ENCODE measurements at regions of chr3 and their contacts with region 1.

Region 1: DNA sequence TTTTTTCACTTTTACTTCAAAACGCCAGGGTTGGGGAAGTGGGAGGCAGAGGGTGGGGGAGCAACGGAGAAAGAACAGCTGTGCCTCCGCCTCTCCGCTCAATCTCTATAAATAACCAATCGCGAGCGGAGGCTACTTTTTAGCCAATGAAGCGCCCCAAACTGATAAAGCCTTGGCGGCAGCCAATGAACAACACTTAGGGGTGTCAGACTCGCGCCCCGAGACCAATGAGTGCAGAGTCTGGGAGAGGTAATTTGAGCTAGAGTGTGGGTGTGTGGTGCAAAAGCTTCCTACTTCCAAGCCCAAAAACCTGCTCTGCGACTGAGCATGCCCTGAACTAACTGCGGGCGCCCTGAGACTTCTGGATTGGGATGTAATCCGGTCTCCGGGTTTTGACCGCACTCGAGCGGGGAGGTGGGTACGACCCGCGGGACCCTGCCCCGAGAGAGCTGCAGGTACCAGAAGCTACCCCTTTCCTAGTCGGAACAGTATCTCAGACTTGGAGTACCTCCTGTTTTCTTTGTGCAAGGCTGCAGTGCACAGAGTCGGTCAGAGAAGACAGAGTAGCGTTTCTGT is 800 bp upstream of the RAP2B start:
- DNase-seq: peak; percentile 99
- H3K4me3 ChIP-seq: peak overlapping the region; percentile 66
- H3K27me3 ChIP-seq: no peaks in the 10 kb centered on the region
- CTCF ChIP-seq: no peak

Region 2: GRCh38 chr3:153043729-153044328 is 117.4 kb before region 1 on chr3:
- CTCF ChIA-PET with region 1: interaction called, 12 read pairs
- POLR2A ChIA-PET with region 1: interaction called, 5 read pairs
- DNase-seq: no peak
- H3K4me3 ChIP-seq: no peak overlapping the region
- H3K27me3 ChIP-seq: no peaks in the 10 kb centered on the region
- CTCF ChIP-seq: no peak

Region 3: DNA sequence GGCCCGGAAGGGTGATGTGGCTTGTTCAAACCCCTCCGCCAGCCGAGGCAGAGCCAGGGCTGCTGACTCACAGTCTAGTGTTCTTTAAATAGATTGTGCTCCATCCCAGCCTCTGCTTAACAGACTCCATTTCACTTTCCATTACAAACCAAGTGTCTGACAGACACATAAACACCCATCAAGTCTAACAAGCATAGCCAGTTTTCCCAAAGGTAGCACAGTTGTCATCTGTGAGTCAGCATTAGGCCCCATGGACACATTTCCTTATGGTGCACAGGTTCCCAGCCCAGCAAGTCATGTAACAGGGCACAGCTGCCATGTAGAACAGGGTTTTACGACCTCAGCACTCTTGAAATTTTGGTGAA is 109.1 kb before region 1 on chr3:
- CTCF ChIA-PET with region 1: interaction called, 10 read pairs
- POLR2A ChIA-PET with region 1: no interaction called
- DNase-seq: peak; percentile 74
- H3K4me3 ChIP-seq: no peak overlapping the region
- H3K27me3 ChIP-seq: no peaks in the 10 kb centered on the region
- CTCF ChIP-seq: no peak

Region 4: DNA sequence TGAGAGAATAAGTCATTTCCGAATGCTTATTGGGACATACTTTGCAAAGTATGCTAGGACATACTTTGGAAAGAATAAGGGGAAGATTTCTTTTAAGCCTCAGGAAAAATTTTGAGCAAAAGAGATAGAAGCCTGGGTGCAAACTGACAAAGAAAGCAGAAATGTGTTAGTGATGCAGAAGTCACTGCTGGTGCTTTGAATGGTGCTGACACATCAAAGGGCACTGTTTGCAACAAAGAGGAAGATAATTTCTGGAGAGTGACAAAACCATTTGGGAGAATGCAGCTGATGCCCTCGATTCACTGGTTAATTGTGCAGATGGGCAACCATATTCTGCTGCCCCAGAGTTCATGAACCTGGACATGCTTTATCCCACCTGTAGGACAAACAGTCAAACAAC is 10.2 kb before region 1 on chr3:
- CTCF ChIA-PET with region 1: interaction called, 10 read pairs
- POLR2A ChIA-PET with region 1: no interaction called
- DNase-seq: no peak
- H3K4me3 ChIP-seq: no peak overlapping the region
- H3K27me3 ChIP-seq: no peaks in the 10 kb centered on the region
- CTCF ChIP-seq: no peak

Region 5: DNA sequence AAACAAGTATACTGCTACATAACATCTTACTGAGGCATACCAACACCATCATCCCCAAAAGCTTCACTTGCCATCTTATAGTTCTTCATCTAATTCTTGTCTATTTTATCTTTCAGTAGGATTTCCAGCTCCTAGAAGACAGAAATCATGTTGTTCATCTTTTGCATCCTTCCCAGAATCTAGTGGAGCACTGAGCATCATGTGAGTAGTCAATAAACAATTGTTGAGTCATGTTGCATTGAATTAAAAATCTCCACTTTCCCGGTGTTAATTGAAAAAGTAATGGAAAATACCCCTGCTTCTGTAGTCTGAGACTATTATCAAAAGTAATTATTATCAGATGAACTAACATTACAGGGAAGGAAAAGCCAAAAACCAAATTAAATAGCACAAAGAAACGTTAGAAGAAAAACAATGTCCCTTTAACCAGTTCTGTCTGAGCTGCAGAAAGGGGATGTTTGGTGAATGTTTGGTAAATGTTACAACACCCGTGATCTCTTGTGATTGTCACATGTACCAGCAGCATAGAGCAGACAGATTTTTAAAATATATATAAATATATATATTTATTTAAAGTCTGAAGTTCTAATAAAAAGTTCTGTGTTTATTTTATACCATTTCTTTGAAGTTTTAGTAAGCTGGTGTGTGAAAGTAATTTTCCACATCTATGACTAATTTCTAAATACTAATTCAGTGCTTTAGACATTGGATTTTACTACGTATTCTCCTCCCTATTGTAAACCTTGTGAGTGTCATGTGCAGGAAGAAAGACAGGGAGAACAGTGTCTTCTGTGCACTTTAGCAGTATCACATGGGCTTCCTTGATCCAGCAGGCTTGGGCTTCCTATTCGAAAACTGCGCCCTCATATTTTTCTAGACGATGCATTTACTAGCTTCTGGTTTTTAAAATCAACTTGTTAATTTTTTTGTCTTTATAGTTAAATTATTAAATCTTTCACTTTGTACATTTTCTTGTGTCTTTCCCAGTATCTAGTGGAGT is 86.4 kb after region 1 on chr3:
- CTCF ChIA-PET with region 1: no interaction called
- POLR2A ChIA-PET with region 1: interaction called, 17 read pairs
- DNase-seq: no peak
- H3K4me3 ChIP-seq: no peak overlapping the region
- H3K27me3 ChIP-seq: no peaks in the 10 kb centered on the region
- CTCF ChIP-seq: no peak

Measured in BJ (cell line).